A549 (cell line): ENCODE measurements at regions of chr4 and their contacts with region 1.

Region 1: DNA sequence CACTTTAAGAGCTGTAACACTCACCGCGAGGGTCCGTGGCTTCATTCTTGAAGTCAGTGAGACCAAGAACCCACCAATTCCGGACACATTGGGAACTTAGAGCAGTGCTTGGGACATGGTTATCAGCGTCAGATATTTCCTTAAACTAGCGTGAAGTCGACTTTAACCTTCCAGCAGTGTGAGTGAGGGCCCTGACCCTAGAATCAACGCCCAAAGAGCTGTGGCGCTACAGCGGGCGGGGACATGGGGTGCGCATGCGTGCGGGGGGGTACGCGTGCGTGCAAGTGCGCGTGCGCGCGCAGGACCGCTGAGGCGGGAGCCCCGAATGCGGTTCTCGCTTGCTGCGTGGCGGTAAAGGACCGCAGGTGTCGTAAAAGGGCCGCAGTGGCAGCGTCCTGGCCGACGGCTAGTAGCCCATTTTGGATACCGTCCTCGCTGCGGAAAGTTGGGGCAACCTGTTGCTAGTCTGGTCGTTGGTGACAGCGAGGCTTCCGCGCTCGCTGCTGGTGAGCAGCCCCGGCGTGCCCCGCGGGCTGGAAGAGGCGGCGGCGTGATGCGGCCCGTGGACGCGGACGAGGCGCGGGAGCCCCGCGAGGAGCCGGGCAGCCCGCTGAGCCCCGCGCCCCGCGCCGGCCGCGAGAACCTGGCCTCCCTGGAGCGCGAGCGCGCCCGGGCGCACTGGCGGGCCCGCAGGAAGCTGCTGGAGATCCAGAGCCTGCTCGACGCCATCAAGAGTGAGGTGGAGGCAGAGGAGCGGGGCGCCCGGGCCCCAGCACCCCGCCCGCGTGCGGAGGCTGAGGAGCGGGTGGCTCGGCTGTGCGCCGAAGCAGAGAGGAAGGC is 19.8 kb upstream of the S100P start:
- DNase-seq: peak; percentile 89 to 96
- ATAC-seq: peak; percentile 90 to 91
- H3K4me3 ChIP-seq: peak overlapping the region; percentile 85
- H3K27ac ChIP-seq: peak overlapping the region; percentile 88 to 91
- H3K4me1 ChIP-seq: peaks cover 20% of the 10 kb centered on the region
- CTCF ChIP-seq: no peak
- EP300 ChIP-seq: no peak
- POLR2A ChIP-seq: peak; percentile 62
- RAD21 ChIP-seq: no peak

Region 2: GRCh38 chr4:6200011-6200921 is 473.6 kb before region 1 on chr4 and contains the start of gene JAKMIP1:
- CTCF ChIA-PET with region 1: no interaction called
- POLR2A ChIA-PET with region 1: no interaction called
- DNase-seq: peak; percentile 55 to 57
- ATAC-seq: peak; percentile 52 to 58; a peak in 4 of 6 replicates
- H3K4me3 ChIP-seq: peak within 1 kb of the TSS; percentile 62
- H3K27ac ChIP-seq: peak within 1 kb of the TSS in 1 of 2 experiments; percentile 73; a peak in 2 of 6 replicates
- H3K4me1 ChIP-seq: peaks cover 15% of the 10 kb centered on the region
- CTCF ChIP-seq: no peak
- EP300 ChIP-seq: no peak
- POLR2A ChIP-seq: no peak
- RAD21 ChIP-seq: no peak
- polyA plus RNA-seq, gene JAKMIP1: not detected in 2 replicates

Region 3: GRCh38 chr4:6372649-6373525 is 301.0 kb before region 1 on chr4:
- CTCF ChIA-PET with region 1: no interaction called
- POLR2A ChIA-PET with region 1: no interaction called
- DNase-seq: peak; percentile 47 to 57
- ATAC-seq: peak; percentile 67 to 84; a peak in 4 of 6 replicates
- H3K4me3 ChIP-seq: no peak overlapping the region
- H3K27ac ChIP-seq: no peak overlapping the region
- H3K4me1 ChIP-seq: no peaks in the 10 kb centered on the region
- CTCF ChIP-seq: no peak
- EP300 ChIP-seq: no peak
- POLR2A ChIP-seq: no peak
- RAD21 ChIP-seq: no peak

Region 4: GRCh38 chr4:6663596-6664393 is 10.1 kb before region 1 on chr4:
- CTCF ChIA-PET with region 1: interaction called, 5 read pairs
- POLR2A ChIA-PET with region 1: interaction called, 14 read pairs
- DNase-seq: no peak
- ATAC-seq: peak in 1 of 2 experiments; percentile 14; a peak in 2 of 6 replicates
- H3K4me3 ChIP-seq: peak overlapping the region; percentile 38; the same call in 2 of the 3 replicates
- H3K27ac ChIP-seq: peak overlapping the region; percentile 27 to 59; a peak in 3 of 6 replicates
- H3K4me1 ChIP-seq: peaks cover 7% of the 10 kb centered on the region; the same call in 2 of the 3 replicates
- CTCF ChIP-seq: no peak
- EP300 ChIP-seq: no peak
- POLR2A ChIP-seq: no peak
- RAD21 ChIP-seq: no peak

Region 5: DNA sequence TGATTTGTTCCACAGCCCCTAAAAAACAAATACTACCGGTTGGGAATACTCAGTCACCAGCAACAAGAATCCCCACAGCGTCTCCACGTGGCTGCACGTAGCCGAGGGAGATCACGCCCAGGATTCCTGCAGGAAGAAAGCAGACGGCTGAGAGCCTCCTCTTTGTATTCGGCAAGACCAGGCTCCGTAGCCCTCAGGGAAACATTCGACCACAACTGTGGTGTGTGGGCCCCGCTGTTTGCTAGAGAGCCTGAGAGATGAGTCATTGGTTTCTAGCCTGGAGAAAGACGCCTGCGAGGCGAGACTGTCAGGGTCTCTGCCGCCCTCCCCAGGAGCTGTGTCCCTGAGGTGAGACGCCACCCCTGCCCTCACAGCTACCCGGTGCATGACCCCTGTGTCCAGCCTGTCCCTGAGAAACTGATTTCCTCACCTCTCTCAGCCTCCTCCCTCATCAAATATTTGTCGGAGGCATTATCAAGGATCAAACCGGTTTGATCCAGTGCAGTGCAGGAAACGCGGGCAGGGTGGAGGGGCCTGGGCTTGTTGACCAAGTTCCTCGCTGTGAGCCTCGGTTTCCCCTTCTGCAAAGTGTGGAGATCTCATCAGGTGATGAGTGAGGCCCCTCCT is 15.1 kb after region 1 on chr4:
- CTCF ChIA-PET with region 1: interaction called, 24 read pairs
- POLR2A ChIA-PET with region 1: interaction called, 4 read pairs
- DNase-seq: peak; percentile 77 to 82
- ATAC-seq: peak; percentile 75 to 88
- H3K4me3 ChIP-seq: no peak overlapping the region
- H3K27ac ChIP-seq: peak overlapping the region; percentile 78 to 89
- H3K4me1 ChIP-seq: peaks cover 40% of the 10 kb centered on the region
- CTCF ChIP-seq: no peak
- EP300 ChIP-seq: no peak
- POLR2A ChIP-seq: no peak
- RAD21 ChIP-seq: no peak

Region 6: DNA sequence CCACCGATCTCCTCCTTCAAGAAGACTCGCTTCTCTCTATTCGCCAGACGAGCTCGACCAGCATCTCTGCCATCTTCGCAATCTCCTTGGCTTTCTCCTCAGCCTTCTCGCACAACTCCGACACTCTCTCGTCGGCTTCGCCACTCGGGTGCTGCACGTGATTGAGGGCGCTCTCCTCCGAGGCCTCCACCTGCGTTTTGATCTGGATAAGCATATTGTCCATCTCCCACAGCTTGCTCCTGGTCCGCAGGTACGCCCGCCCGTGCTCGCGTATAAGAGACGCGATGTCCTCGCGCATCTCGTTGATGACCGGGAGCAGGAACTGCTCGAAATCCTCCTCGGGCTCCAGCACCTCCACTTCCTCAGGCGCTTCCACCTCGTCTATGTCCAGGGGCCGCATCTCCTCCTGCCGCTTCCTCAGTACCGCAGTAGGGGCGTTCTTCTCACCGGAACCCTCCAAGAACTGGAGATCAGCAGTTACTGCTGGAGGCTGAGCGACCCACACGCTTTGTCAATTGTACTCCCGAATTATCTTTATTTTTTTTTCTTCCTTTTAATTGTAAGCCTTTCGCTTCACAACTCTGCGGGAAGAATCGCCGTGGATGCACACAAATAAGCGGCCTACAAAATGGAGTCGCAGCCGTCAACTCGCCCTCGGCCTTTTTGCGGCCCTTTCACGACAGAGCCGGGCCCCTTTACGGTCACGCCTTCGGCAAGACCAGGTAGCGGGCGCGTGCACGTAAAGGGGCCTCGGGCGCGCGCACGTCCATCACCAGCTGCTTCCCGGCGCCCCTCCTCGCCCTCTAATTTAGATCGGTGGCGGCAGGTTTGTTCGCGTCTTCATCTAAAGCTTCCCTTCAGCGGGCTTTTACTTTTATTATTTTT is 35.6 kb after region 1 on chr4 and contains the start of gene MRFAP1L1:
- CTCF ChIA-PET with region 1: no interaction called
- POLR2A ChIA-PET with region 1: interaction called, 11 read pairs
- DNase-seq: peak; percentile 73 to 97
- ATAC-seq: peak; percentile 78 to 88
- H3K4me3 ChIP-seq: peak within 1 kb of the TSS; percentile 66
- H3K27ac ChIP-seq: peak within 1 kb of the TSS; percentile 78 to 86
- H3K4me1 ChIP-seq: no peaks in the 10 kb centered on the region; the same call in 2 of the 3 replicates
- CTCF ChIP-seq: no peak
- EP300 ChIP-seq: no peak
- POLR2A ChIP-seq: peak; percentile 33
- RAD21 ChIP-seq: no peak
- polyA plus RNA-seq, gene MRFAP1L1: 42.8 and 78.2 TPM in 2 replicates